GM23248 (cell line): ENCODE measurements at regions of chr3 and their contacts with region 1.

Region 1: GRCh38 chr3:155701882-155702465 is 42.9 kb downstream of the PLCH1 start:
- DNase-seq: peak; percentile 76
- H3K4me3 ChIP-seq: no peak overlapping the region
- H3K27ac ChIP-seq: no peak overlapping the region
- H3K4me1 ChIP-seq: 0 out of 2 replicates have a peak, but pooled peaks cover 4% of the 10 kb centered on the region
- H3K27me3 ChIP-seq: no peaks in the 10 kb centered on the region

Region 2: DNA sequence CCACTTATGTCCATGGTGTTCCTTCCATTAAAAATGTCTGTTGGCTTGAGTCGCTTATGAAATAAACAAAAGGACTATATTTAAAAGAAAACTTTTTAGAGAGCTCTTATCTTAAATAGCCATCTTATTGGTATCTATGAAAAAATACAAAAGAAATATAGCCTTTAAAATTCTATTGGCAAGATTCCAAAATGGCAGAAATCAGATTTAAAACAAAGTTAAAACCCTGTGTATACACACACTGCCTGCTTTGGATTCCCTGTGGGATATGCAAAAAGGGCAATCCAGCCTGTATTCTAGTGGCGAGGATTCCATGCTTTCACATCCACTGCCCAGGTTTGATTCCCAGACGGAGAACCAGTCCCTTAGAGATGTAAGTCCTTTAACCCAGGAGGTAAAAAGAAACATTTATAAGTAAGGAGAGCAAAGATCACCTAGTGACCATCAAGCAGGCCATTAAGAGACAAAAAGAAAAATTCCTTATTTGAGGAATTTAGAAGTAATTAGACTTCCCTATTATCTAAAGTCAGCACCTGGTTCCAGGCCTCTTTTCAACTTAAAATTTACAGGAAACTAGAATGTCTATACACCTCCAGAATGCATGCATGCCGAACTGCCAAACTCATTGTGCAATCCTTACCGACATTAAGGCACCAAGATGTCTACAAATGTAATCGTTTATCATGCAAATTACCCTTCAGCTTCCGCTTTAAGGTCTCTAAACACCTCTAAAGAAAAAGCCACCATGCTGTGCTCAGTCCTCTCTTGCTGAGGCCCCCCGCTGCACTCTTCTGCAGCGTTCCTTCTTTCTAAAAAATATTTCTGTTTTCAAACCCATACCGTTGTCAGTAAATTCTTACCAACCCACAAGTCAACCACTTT is 338.9 kb before region 1 on chr3:
- in situ Hi-C with region 1: loop called (anchors 10 kb)
- DNase-seq: no peak
- H3K4me3 ChIP-seq: no peak overlapping the region
- H3K27ac ChIP-seq: no peak overlapping the region
- H3K4me1 ChIP-seq: no peaks in the 10 kb centered on the region
- H3K27me3 ChIP-seq: no peaks in the 10 kb centered on the region

Region 3: DNA sequence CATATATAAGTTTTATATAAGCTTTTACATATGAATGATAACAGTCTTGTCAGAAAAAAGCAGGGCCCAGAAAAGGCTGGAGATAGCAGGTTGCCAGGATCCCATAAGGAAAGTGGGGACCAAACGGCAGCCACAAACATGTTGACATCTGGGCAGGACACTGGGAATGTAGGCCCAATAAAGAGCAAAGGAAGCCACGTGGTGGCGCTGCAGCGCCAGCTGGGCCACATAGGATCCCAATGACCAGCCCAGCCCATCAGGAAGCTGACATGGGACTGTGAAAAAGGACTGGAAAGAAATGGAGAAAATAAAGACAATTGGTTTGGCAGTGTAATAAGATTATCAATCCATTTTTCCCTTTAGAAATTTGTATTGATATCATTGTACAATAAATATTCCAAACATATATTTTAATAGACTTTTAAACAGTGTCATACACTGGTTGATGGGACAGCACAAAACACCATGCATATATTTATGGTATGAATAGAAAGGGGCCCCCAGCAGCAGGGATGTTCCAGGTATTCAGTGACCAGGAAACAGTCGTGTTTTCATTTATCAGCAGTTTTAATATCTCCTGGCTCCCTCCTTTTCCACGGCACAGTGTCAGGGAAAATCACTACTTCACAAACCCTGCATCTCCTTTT is 319.5 kb before region 1 on chr3:
- in situ Hi-C with region 1: loop called (anchors 5 kb)
- DNase-seq: peak; percentile 83
- H3K4me3 ChIP-seq: no peak overlapping the region
- H3K27ac ChIP-seq: no peak overlapping the region
- H3K4me1 ChIP-seq: no peaks in the 10 kb centered on the region
- H3K27me3 ChIP-seq: no peaks in the 10 kb centered on the region

Region 4: GRCh38 chr3:155572085-155572484 is 129.9 kb before region 1 on chr3:
- in situ Hi-C with region 1: no loop called
- DNase-seq: peak; percentile 66
- H3K4me3 ChIP-seq: no peak overlapping the region
- H3K27ac ChIP-seq: no peak overlapping the region
- H3K4me1 ChIP-seq: peaks cover 9% of the 10 kb centered on the region; the same call in 1 of the 2 replicates
- H3K27me3 ChIP-seq: no peaks in the 10 kb centered on the region

Region 5: DNA sequence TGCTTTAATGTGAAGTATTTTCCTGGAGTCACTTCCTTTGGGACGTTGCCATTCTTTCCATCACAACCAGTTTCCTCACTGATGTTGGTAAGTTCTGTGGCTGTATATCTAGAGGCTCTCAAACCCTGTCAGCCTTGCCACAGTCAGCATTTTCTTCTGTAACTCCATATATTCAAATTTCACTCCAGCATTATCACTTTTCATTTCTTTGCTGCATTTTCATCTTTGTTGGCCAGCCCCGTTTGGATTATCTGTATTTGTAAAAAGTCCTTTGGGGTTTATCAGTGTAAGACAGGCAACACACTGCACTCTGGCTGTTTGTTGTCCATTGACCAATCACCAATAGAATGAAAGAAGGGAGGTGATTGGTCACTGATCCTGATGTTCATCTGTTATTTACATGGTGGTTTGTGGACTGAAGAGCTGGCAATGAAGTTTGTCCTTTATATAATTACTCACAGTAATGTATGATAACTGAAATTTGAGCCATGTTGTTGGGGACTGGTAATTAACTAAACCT is 188.8 kb after region 1 on chr3:
- in situ Hi-C with region 1: no loop called
- DNase-seq: peak; percentile 61
- H3K4me3 ChIP-seq: 0 out of 2 replicates have a peak overlapping the region, but pooled peaks have one; percentile 2
- H3K27ac ChIP-seq: peak overlapping the region; percentile 49
- H3K4me1 ChIP-seq: peaks cover 22% of the 10 kb centered on the region
- H3K27me3 ChIP-seq: no peaks in the 10 kb centered on the region